BJ (cell line): ENCODE measurements at regions of chr11 and their contacts with region 1.

Region 1: DNA sequence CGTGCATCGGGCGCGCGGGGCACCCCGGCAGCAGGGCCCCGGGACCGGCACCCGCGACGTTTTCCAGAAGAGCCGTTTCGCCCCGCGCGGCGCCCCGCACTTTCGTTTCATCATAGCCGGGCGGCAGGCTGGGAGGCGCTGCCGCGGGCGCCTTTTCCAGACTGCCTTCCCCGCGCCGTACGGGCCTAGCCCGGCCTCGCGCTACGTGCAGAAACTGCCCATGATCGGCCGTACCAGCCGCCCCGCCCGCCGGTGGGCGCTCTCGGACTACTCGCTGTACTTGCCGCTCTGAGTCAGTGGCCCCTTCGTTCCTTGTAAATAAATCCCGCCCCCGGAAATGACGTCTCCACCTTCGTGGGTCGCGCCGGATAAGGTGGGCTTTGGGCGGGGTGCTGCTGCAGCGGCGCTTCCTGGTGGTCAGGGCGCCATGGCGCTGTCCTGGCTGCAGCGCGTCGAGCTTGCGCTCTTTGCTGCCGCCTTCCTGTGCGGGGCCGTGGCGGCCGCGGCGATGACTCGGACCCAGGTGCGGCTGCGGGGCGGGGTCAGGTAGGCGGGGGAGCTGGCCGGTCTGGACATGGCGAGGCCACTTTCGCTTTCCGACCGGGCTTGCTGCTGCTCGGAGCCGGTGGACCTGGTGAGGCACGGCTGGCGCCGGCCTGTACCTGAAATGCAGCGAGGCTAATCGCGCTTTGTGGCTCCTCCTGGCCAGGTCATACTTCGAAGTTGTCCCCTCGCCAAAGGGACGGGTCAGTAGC is at the start of gene TMEM179B:
- DNase-seq: peak; percentile 82
- H3K4me3 ChIP-seq: peak within 1 kb of the TSS; percentile 69
- H3K27me3 ChIP-seq: no peaks in the 10 kb centered on the region
- CTCF ChIP-seq: peak; percentile 82
- polyA plus RNA-seq, gene TMEM179B: 76.2 and 97.1 TPM in 2 replicates

Region 2: GRCh38 chr11:62753736-62754603 is 33.2 kb before region 1 on chr11 and contains the start of gene ZBTB3:
- CTCF ChIA-PET with region 1: interaction called, 13 read pairs
- POLR2A ChIA-PET with region 1: no interaction called
- DNase-seq: peak; percentile 98
- H3K4me3 ChIP-seq: peak within 1 kb of the TSS; percentile 75
- H3K27me3 ChIP-seq: no peaks in the 10 kb centered on the region
- CTCF ChIP-seq: no peak
- polyA plus RNA-seq, gene ZBTB3: 3.5 and 3.8 TPM in 2 replicates

Region 3: DNA sequence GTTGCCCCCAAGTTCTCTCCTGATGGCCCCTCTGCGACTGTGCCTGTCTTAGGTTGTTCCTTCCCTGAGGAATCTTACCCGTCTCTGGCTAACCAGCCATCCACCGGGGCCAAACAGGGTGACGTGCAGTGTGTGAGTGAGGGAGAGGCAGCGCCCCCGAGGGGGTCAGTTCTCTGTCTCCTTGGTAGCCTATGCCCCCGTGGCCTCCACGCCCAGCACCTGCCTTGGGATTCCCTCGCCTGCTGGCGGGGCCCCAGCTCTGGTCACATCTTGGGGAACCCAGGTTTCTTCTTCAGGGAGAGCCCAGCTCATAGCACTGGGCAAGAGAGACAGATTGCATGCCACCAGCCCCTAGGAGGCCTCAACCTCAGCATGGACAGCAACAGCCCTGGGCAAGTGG is 12.3 kb after region 1 on chr11:
- CTCF ChIA-PET with region 1: interaction called, 14 read pairs
- POLR2A ChIA-PET with region 1: no interaction called
- DNase-seq: no peak
- H3K4me3 ChIP-seq: no peak overlapping the region
- H3K27me3 ChIP-seq: no peaks in the 10 kb centered on the region
- CTCF ChIP-seq: no peak

Region 4: DNA sequence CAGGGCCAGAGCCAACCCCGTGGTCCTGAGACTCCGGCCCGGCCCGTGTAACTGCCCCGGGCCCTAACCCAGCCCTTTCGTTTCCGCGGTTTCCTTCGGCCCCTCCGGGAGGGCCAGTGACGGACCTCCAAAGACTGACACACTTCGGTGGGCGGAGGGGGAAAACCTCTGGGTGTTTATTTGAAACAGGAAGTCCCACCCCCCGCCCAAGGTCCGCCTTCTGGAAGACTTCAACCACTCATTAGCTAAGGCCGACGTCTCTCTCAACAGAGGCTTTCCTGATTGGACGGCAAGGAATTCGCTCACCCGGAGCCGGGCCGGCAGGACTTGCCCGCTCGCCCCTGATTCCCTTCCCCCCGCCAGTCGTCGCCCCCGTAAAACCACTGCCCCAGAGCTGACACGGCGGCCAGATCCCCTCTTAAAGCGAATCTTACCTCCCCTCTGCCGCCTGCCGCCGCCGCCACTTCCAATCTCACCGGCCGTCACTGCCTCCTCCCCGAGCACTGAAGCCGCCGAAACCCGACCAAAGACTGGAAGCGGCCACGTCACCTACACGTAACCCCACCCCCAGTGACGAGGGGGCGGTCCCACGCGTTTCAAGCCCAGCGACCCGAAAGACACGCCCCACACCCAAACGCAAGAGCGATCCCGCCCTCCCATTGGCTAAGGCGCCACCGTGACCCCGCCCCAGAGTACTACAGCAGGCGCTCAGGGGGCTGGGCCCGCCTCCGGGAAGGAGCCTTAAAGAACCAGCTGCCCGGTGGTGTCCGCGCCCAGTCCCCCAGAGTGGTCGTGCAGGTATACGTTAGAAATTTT is 44.5 kb after region 1 on chr11 and contains the start of gene STX5:
- CTCF ChIA-PET with region 1: interaction called, 24 read pairs
- POLR2A ChIA-PET with region 1: no interaction called
- DNase-seq: peak; percentile 89
- H3K4me3 ChIP-seq: peak within 1 kb of the TSS; percentile 92
- H3K27me3 ChIP-seq: no peaks in the 10 kb centered on the region
- CTCF ChIP-seq: no peak
- polyA plus RNA-seq, gene STX5: 61.5 and 76.6 TPM in 2 replicates

Region 5: DNA sequence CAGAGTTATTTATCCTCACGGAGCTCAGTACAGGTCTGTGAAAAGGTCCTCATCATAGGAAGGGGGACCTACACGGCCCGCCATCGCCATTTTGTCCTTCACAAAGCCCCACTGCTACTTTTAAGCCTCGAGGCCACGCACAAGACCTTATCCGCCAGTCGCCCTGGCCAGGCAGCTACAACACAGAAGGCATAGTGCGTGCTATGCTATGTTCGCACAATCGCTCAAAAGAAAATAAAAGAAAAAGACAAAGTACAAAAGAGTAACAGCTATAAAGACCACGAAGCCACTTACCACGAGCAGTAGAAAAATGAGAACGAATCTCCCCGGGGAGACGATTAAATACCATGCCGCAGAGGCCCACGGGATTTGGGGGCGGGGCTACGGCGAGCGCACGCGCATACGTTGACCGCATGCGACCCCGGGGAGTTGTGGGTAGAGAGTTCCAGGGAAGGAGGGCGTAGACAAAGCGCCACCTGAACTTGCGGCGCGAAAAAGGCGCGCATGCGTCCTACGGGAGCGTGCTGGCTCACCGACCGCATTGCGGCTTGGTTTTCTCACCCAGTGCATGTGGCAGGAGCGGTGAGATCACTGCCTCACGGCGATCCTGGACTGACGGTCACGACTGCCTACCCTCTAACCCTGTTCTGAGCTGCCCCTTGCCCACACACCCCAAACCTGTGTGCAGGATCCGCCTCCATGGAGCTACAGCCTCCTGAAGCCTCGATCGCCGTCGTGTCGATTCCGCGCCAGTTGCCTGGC is 68.6 kb after region 1 on chr11:
- CTCF ChIA-PET with region 1: interaction called, 76 read pairs
- POLR2A ChIA-PET with region 1: no interaction called
- DNase-seq: peak; percentile 86
- H3K4me3 ChIP-seq: peak overlapping the region; percentile 67
- H3K27me3 ChIP-seq: no peaks in the 10 kb centered on the region
- CTCF ChIP-seq: no peak

Region 6: GRCh38 chr11:62875698-62876478 is 88.7 kb after region 1 on chr11:
- CTCF ChIA-PET with region 1: interaction called, 43 read pairs
- POLR2A ChIA-PET with region 1: no interaction called
- DNase-seq: no peak
- H3K4me3 ChIP-seq: no peak overlapping the region
- H3K27me3 ChIP-seq: no peaks in the 10 kb centered on the region
- CTCF ChIP-seq: no peak

Region 7: DNA sequence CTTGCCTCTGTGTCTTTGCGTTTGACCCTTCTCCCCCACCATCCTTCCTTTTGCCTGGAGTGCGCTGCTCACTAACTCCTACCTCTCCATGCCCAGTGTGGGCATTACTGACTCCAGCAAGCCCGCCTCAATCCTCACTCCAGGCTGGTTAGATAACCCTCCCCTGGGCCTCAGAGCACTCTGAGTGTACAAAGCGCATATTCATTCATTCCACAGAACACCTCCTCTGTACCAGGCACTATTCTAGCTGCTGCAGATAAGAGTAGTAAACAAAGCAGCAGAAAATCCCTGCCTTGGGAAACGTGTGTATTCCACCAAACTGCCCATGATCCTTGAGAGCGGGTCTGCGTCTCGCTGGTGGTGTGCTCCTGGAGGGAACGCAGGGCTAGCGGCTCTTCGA is 225.2 kb after region 1 on chr11:
- CTCF ChIA-PET with region 1: no interaction called
- POLR2A ChIA-PET with region 1: no interaction called
- DNase-seq: no peak
- H3K4me3 ChIP-seq: no peak overlapping the region
- H3K27me3 ChIP-seq: peaks cover 1% of the 10 kb centered on the region
- CTCF ChIP-seq: no peak